ENCODE measurements at regions of chr1 and their contacts with region 1.

Region 1: DNA sequence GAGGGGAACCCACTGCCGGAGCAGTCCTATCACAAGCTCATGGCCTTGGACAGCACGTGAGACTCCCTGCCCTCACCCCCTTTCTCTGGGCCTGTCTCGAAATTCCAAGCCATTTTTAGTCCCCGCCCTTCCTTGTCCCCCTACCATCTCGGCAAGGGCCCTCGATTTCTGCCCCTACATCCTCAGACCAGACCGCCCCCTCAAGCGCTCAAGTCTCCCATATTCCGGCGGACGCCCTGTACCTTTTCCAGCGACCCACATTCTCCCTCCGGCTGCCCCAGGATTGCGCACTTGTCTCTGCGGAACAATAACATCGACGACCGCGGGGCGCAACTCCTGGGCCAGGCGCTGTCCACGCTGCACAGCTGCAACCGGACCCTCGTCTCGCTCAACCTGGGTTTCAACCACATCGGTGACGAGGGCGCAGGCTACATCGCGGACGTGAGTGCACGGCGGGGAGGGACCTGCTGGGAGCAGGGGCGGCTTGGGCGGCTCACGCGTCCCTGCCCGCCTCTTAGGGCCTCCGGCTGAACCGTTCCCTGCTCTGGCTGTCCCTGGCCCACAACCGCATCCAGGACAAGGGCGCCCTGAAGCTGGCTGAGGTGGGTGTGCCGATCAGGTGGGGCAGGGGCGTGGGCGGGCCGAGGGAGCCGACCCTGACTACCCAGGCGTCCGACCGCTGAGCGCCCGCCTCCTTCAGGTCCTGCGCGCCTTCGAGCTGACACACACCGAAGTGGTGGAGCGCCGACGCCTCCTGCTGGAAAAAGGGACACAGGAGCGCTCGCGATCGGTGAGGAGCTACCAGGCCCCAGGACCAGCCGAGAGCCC is 7.0 kb downstream of the LRRC71 start:
- DNase-seq: peak; percentile 74 to 87 (median 78)
- ATAC-seq: peak; percentile 87
- H3K4me3 ChIP-seq: peak overlapping the region; percentile 30; the same call in 1 of the 2 replicates
- H3K27ac ChIP-seq: no peak overlapping the region; the same call in 2 of the 3 replicates
- H3K4me1 ChIP-seq: peaks cover 24 to 33% of the 10 kb centered on the region in 2 experiments
- H3K27me3 ChIP-seq: peaks cover 5 to 6% of the 10 kb centered on the region in 2 experiments; a peak in 2 of 5 replicates
- CTCF ChIP-seq: peak; percentile 77 to 92 (median 81)
- EP300 ChIP-seq: no peak
- POLR2A ChIP-seq: no peak
- RAD21 ChIP-seq: peak; percentile 77 to 78

Region 2: GRCh38 chr1:156910309-156910782 is 17.1 kb before region 1 on chr1:
- CTCF ChIA-PET with region 1: interaction called, 12 read pairs
- POLR2A ChIA-PET with region 1: interaction called, 4 read pairs
- in situ Hi-C with region 1: no loop called
- intact Hi-C with region 1: no loop called
- DNase-seq: peak; percentile 79 to 89 (median 86)
- ATAC-seq: peak; percentile 49
- H3K4me3 ChIP-seq: peak overlapping the region; percentile 14; the same call in 1 of the 2 replicates
- H3K27ac ChIP-seq: no peak overlapping the region
- H3K4me1 ChIP-seq: peaks cover 52 to 73% of the 10 kb centered on the region in 2 experiments
- H3K27me3 ChIP-seq: no peaks in the 10 kb centered on the region
- CTCF ChIP-seq: peak; percentile 72 to 82 (median 76)
- EP300 ChIP-seq: no peak
- POLR2A ChIP-seq: no peak
- RAD21 ChIP-seq: peak; percentile 49 to 64

Region 3: GRCh38 chr1:156970017-156970416 is 42.6 kb after region 1 on chr1:
- CTCF ChIA-PET with region 1: no interaction called
- POLR2A ChIA-PET with region 1: interaction called, 4 read pairs
- in situ Hi-C with region 1: no loop called
- intact Hi-C with region 1: loop called (anchors 5 kb)
- DNase-seq: peak in 2 of 4 experiments; percentile 16 to 22
- ATAC-seq: peak; percentile 76
- H3K4me3 ChIP-seq: no peak overlapping the region
- H3K27ac ChIP-seq: no peak overlapping the region
- H3K4me1 ChIP-seq: peaks cover 0 to 3% of the 10 kb centered on the region in 2 experiments; a peak in 1 of 5 replicates
- H3K27me3 ChIP-seq: no peaks in the 10 kb centered on the region
- CTCF ChIP-seq: peak; percentile 15 to 51 (median 45); a peak in 3 of 6 replicates
- EP300 ChIP-seq: no peak
- POLR2A ChIP-seq: no peak
- RAD21 ChIP-seq: peak; percentile 32 to 59

Region 4: GRCh38 chr1:157624471-157624870 is 697.0 kb after region 1 on chr1:
- CTCF ChIA-PET with region 1: no interaction called
- POLR2A ChIA-PET with region 1: no interaction called
- in situ Hi-C with region 1: no loop called
- intact Hi-C with region 1: no loop called
- DNase-seq: peak in 1 of 4 experiments; percentile 5
- ATAC-seq: peak; percentile 44; the same call in 1 of the 3 replicates
- H3K4me3 ChIP-seq: no peak overlapping the region
- H3K27ac ChIP-seq: no peak overlapping the region
- H3K4me1 ChIP-seq: no peaks in the 10 kb centered on the region
- H3K27me3 ChIP-seq: no peaks in the 10 kb centered on the region; a peak in 1 of 5 replicates
- CTCF ChIP-seq: no peak
- EP300 ChIP-seq: no peak
- POLR2A ChIP-seq: no peak
- RAD21 ChIP-seq: no peak

Measured in K562 (cell line).